ENCODE measurements at regions of chr2 and their contacts with region 1.

Region 1: GRCh38 chr2:23351388-23352141 is 33.4 kb upstream of the KLHL29 start:
- DNase-seq: peak; percentile 83
- ATAC-seq: peak; percentile 94
- H3K4me3 Mint-ChIP-seq: no peak overlapping the region
- H3K27ac Mint-ChIP-seq: no peak overlapping the region
- H3K4me1 Mint-ChIP-seq: no peaks in the 10 kb centered on the region
- H3K27me3 Mint-ChIP-seq: peaks cover 23% of the 10 kb centered on the region

Region 2: GRCh38 chr2:23199115-23199918 is 152.2 kb before region 1 on chr2:
- CTCF ChIA-PET with region 1: no interaction called
- POLR2A ChIA-PET with region 1: no interaction called
- intact Hi-C with region 1: loop called in 1 of 2 experiments (anchors 1 kb)
- DNase-seq: peak; percentile 34
- ATAC-seq: no peak
- H3K4me3 Mint-ChIP-seq: no peak overlapping the region
- H3K27ac Mint-ChIP-seq: no peak overlapping the region
- H3K4me1 Mint-ChIP-seq: no peaks in the 10 kb centered on the region
- H3K27me3 Mint-ChIP-seq: peaks cover 10% of the 10 kb centered on the region

Measured in activated CD4-positive, alpha-beta T cell treated with anti-CD3 and anti-CD28 coated beads for 36 hours (primary cell).